ENCODE measurements at regions of chr6 and their contacts with region 1.

Region 1: GRCh38 chr6:37303932-37304363 is 46.0 kb upstream of the TMEM217 start:
- DNase-seq: peak; percentile 44 to 64 (median 60)
- H3K4me3 ChIP-seq: no peak overlapping the region
- H3K27ac ChIP-seq: no peak overlapping the region
- H3K4me1 ChIP-seq: peaks cover 0 to 14% (median 2%) of the 10 kb centered on the region in 4 experiments
- H3K27me3 ChIP-seq: no peaks in the 10 kb centered on the region

Region 2: GRCh38 chr6:37137201-37138090 is 166.5 kb before region 1 on chr6:
- CTCF ChIA-PET with region 1: no interaction called
- POLR2A ChIA-PET with region 1: no interaction called
- DNase-seq: no peak
- H3K4me3 ChIP-seq: no peak overlapping the region
- H3K27ac ChIP-seq: no peak overlapping the region
- H3K4me1 ChIP-seq: peaks cover 0 to 11% (median 1%) of the 10 kb centered on the region in 4 experiments
- H3K27me3 ChIP-seq: no peaks in the 10 kb centered on the region

Region 3: DNA sequence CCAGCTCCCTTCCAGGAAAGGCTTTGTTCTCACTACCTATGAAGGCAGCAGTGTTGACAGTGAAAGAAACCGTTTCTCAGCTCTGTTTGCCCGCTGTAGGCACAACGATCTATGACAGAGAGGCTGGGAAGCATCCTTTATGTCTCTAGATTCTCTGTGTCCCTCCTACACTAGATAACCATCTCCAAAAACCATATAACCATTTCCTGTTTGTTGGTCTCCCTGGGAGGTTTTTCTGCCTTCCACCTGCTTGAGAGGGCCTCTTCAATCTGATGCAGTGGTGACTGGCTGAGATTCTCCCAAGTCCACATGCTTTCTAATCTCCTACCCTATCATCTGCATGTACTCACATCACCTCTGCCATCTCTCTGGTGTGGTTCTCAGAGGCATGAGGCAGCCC is 14.0 kb before region 1 on chr6:
- CTCF ChIA-PET with region 1: interaction called, 23 read pairs
- POLR2A ChIA-PET with region 1: no interaction called
- DNase-seq: no peak
- H3K4me3 ChIP-seq: no peak overlapping the region
- H3K27ac ChIP-seq: no peak overlapping the region
- H3K4me1 ChIP-seq: peaks cover 0 to 15% (median 3%) of the 10 kb centered on the region in 4 experiments
- H3K27me3 ChIP-seq: no peaks in the 10 kb centered on the region

Region 4: DNA sequence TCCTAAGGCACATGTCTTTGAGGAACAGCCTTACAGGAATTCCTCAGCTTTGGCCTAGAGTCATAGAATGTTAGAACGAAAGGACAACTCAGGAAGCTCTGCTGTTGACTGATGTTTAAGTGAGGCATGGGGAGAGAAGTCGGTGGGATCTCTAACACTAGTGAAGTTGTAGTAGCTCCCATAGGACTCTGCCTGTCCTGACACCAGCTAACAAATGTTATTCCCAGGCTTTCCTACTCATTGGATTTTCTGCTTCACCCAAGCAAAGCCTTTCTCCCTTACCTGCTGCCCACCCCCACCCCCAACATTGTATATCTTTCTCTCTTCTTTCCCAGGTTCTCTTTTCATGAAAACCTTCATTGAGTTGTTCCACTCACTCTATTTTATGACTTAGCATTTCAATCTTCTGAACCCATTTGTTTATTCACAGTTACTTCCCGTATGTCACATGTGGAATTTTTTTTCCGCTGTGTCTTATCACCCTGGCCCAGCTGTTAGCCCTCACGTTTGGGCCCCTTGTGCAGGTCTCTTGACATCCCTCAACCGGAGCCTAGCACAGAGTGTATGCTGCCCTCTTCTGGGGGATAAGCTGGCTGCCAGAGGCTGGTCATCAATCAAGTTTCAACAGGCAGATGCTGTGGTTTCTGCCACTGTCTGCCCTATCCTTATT is 10.7 kb after region 1 on chr6:
- CTCF ChIA-PET with region 1: interaction called, 91 read pairs
- POLR2A ChIA-PET with region 1: interaction called, 4 read pairs
- DNase-seq: peak; percentile 96 to 99 (median 98)
- H3K4me3 ChIP-seq: peak overlapping the region in 1 of 7 experiments; percentile 38
- H3K27ac ChIP-seq: peak overlapping the region; percentile 75 to 91
- H3K4me1 ChIP-seq: peaks cover 5 to 40% (median 34%) of the 10 kb centered on the region in 4 experiments
- H3K27me3 ChIP-seq: no peaks in the 10 kb centered on the region

Region 5: DNA sequence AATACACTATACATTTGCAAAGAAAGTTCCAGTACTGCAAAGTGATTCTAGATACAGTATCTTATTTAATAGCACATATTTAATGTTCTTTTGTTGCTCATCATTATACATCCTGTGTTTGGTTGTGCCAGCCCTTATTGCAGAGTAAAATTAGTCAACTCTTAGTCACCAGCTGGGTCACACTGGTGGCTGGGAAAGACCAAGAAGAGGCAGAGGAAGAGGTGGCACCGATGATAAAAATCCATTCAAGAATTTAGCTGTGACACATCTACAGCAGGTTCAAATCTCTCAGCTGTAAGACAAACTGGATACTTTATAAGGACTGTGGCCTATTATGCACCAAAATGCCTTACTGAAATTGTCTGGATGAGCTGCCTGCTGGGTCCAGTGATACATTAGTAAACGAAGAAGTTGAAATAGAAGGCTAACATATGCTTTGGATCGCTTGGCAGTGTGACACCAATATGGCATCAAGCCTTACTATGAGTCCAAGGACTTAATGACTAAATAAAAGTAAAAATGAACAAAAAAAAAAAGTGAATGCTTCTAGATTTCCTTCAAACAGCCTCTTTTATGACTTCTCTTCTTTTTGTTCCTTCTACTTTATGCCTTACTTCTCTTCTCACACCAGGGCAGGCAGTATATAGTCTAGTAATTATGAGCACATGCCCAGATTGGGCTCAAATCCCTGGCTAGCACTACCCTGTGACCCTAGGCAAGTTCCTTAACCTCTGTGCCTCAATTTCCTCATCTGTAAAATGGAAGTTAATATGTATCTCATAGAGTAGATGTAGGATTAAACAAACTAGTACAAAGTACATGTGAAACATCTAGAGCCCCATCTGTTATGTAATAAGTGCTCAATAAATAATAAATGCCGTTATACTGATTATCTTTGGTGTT is 20.4 kb after region 1 on chr6:
- CTCF ChIA-PET with region 1: interaction called, 23 read pairs
- POLR2A ChIA-PET with region 1: no interaction called
- DNase-seq: peak in 2 of 3 donors; percentile 26 to 28
- H3K4me3 ChIP-seq: no peak overlapping the region
- H3K27ac ChIP-seq: no peak overlapping the region
- H3K4me1 ChIP-seq: peaks cover 5 to 32% (median 25%) of the 10 kb centered on the region in 4 experiments
- H3K27me3 ChIP-seq: no peaks in the 10 kb centered on the region

Measured in common myeloid progenitor, CD34-positive (primary cell).